ENCODE measurements at regions of chr19 and their contacts with region 1.

Region 1: GRCh38 chr19:48795055-48795684 is 15.7 kb downstream of the BCAT2 start:
- DNase-seq: peak; percentile 93
- H3K4me3 ChIP-seq: peak overlapping the region; percentile 67
- H3K27ac ChIP-seq: peak overlapping the region; percentile 36
- H3K27me3 ChIP-seq: no peaks in the 10 kb centered on the region
- CTCF ChIP-seq: peak; percentile 95

Region 2: DNA sequence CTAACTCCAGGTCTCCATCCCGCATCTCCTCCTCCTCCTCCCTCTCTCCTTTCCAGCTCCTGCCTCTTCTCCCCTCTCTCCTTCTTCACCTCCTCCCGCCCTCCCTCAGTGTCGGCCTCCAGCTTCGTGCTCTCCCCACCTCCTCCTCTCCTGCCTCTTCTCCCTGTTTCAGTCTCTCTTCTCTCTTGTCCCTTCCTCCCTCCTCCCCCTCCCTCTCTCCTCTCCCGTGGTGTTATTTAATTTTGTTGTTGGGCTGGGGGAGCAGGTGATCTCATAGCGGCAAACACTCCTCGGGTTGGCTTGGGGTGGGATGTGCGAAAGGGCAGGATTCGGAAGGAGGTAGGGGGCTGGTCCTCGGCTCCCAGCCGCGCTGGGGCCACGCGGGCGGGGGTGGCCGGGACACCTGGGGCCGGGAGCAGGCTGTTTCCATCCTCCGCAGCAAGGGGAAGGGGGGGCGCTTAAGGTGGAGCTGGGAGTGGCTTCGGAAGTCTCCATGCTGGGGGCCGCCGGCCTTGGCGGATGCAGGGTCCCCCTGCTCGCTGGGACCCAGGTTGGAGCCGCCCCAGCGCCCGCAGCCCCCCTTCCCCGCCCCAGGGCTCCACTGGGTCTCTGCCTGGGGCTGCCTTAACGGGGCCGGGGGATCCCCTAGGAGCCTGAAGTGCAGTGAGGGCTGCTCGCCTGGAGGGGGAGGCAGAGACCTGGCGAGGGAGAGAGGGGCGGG is 149.0 kb before region 1 on chr19 and contains the start of gene CA11:
- in situ Hi-C with region 1: no loop called
- DNase-seq: peak; percentile 68
- H3K4me3 ChIP-seq: peak within 1 kb of the TSS; percentile 52
- H3K27ac ChIP-seq: no peak within 1 kb of the TSS
- H3K27me3 ChIP-seq: no peaks in the 10 kb centered on the region
- CTCF ChIP-seq: peak; percentile 91

Region 3: GRCh38 chr19:48842789-48843162 is 47.6 kb after region 1 on chr19:
- in situ Hi-C with region 1: loop called (anchors 10 kb)
- DNase-seq: peak; percentile 34
- H3K4me3 ChIP-seq: no peak overlapping the region
- H3K27ac ChIP-seq: no peak overlapping the region
- H3K27me3 ChIP-seq: no peaks in the 10 kb centered on the region
- CTCF ChIP-seq: peak; percentile 86